ENCODE measurements at regions of chr5 and their contacts with region 1.

Region 1: DNA sequence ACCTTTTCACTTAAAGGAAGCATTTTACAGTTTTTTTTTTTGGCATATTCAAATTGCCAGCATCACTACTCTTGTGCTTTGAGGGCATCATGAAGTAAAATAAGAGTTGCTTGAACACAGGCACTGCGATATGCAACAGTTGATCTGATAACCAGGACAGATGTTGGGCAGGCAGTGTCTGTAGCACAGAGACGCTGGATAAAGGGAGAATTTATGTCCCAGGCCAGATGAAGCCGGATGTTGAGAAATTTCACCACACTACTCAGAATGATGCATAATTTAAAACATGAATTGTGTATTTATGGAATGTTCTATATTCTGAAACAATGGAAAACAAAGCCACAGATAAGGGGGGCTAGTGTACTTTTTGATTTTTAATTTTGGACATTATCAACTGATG is 71.4 kb downstream of the SLC12A2 start:
- DNase-seq: no peak
- ATAC-seq: no peak
- H3K4me3 Mint-ChIP-seq: no peak overlapping the region
- H3K27ac Mint-ChIP-seq: no peak overlapping the region
- H3K4me1 Mint-ChIP-seq: no peaks in the 10 kb centered on the region
- H3K27me3 Mint-ChIP-seq: no peaks in the 10 kb centered on the region
- CTCF ChIP-seq: no peak

Region 2: DNA sequence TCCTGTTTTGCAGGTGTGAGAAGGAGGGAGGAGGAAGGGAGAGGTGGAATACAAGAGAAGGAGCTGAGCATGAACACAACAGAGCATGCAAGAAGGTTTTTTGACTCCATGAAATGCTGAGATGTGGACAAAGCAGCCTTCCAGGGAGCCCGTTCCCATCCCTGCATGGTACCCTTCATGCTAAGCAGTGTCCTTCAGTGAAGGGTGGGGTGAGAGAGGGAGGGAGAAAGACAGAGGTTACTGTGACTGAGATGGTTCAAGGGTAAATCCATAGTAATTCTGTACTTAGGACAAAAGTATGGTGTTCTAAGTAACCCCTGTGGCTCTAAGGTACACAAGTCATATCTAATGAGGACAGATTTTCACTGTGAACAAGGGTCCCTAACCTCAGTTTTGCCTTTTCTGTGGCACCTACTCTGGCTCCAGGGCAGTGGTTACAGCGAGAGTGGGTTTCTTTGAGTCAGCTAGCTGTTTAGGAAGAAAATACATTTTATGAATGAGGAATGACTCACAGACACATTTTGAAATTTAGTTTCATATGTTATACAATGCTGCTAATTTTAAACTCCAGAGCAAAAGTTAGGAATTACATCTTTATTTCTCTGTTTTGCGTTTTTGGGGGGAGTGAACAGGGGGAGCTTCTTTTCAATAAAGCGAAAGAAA is 256.3 kb before region 1 on chr5:
- CTCF ChIA-PET with region 1: no interaction called
- POLR2A ChIA-PET with region 1: interaction called, 11 read pairs
- intact Hi-C with region 1: no loop called
- DNase-seq: no peak
- ATAC-seq: no peak
- H3K4me3 Mint-ChIP-seq: no peak overlapping the region
- H3K27ac Mint-ChIP-seq: no peak overlapping the region
- H3K4me1 Mint-ChIP-seq: no peaks in the 10 kb centered on the region
- H3K27me3 Mint-ChIP-seq: no peaks in the 10 kb centered on the region
- CTCF ChIP-seq: no peak

Measured in activated B cell treated with CpG ODN at 0.5 μM for 24 hours (primary cell).